ENCODE measurements at regions of chr5 and their contacts with region 1.

Region 1: GRCh38 chr5:15995341-15996052 is 184.1 kb downstream of the MARCHF11 start:
- DNase-seq: peak; percentile 68
- ATAC-seq: no peak
- H3K4me3 ChIP-seq: no peak overlapping the region
- H3K27ac ChIP-seq: no peak overlapping the region
- H3K4me1 ChIP-seq: peaks cover 10% of the 10 kb centered on the region; the same call in 1 of the 2 replicates
- H3K27me3 ChIP-seq: no peaks in the 10 kb centered on the region
- CTCF ChIP-seq: peak; percentile 79

Region 2: GRCh38 chr5:15105796-15106393 is 889.6 kb before region 1 on chr5:
- CTCF ChIA-PET with region 1: no interaction called
- POLR2A ChIA-PET with region 1: no interaction called
- intact Hi-C with region 1: loop called (anchors 10 kb)
- DNase-seq: peak; percentile 74
- ATAC-seq: no peak; the same call in 1 of the 2 replicates
- H3K4me3 ChIP-seq: no peak overlapping the region
- H3K27ac ChIP-seq: no peak overlapping the region
- H3K4me1 ChIP-seq: peaks cover 14% of the 10 kb centered on the region
- H3K27me3 ChIP-seq: no peaks in the 10 kb centered on the region
- CTCF ChIP-seq: peak; percentile 89

Region 3: GRCh38 chr5:15463231-15463980 is 532.1 kb before region 1 on chr5:
- CTCF ChIA-PET with region 1: no interaction called
- POLR2A ChIA-PET with region 1: no interaction called
- intact Hi-C with region 1: loop called (anchors 10 kb)
- DNase-seq: no peak
- ATAC-seq: no peak
- H3K4me3 ChIP-seq: no peak overlapping the region
- H3K27ac ChIP-seq: no peak overlapping the region
- H3K4me1 ChIP-seq: no peaks in the 10 kb centered on the region
- H3K27me3 ChIP-seq: no peaks in the 10 kb centered on the region
- CTCF ChIP-seq: 0 out of 2 replicates have a peak, but pooled peaks have one; percentile 22

Region 4: GRCh38 chr5:15794052-15794985 is 201.2 kb before region 1 on chr5:
- CTCF ChIA-PET with region 1: no interaction called
- POLR2A ChIA-PET with region 1: no interaction called
- intact Hi-C with region 1: loop called (anchors 10 kb)
- DNase-seq: no peak
- ATAC-seq: no peak
- H3K4me3 ChIP-seq: no peak overlapping the region
- H3K27ac ChIP-seq: no peak overlapping the region
- H3K4me1 ChIP-seq: no peaks in the 10 kb centered on the region
- H3K27me3 ChIP-seq: no peaks in the 10 kb centered on the region
- CTCF ChIP-seq: peak; percentile 51

Region 5: GRCh38 chr5:15966066-15966640 is 29.3 kb before region 1 on chr5:
- CTCF ChIA-PET with region 1: no interaction called
- POLR2A ChIA-PET with region 1: no interaction called
- intact Hi-C with region 1: no loop called
- DNase-seq: no peak
- ATAC-seq: no peak
- H3K4me3 ChIP-seq: no peak overlapping the region
- H3K27ac ChIP-seq: no peak overlapping the region
- H3K4me1 ChIP-seq: no peaks in the 10 kb centered on the region
- H3K27me3 ChIP-seq: no peaks in the 10 kb centered on the region
- CTCF ChIP-seq: no peak

Measured in PC-3 (cell line).